ENCODE measurements at regions of chr10 and their contacts with region 1.

Region 1: DNA sequence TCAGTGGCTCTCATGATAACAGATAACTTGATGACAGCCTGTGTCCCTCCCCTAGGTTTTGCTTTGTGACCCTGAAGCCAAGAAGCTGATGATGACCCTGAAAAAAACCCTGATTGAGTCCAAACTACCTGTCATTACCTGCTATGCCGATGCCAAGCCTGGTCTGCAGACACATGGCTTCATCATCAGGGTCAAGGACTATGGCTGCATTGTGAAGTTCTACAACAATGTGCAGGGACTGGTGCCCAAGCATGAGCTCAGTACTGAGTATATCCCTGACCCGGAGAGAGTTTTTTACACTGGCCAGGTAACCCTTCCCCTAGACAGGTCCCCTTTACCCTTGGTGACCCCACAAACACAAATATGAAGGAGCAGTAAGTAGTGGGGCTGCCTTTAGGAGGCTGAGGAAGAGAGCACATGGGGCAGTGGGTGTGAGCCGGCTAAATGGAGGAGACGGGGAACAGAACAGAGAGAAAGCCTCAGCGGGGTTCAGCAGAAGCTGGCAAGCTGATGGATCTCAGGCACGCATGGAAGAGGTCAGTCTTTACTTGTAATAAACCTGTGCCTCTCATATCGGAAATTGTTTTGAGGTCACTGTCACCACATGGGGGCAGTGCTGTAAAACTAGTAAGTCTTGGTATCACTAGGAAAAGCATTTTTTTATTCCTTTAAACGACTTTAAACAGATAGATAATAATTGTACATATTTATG is 20.2 kb downstream of the PDCD11 start:
- DNase-seq: peak; percentile 81
- H3K4me3 Mint-ChIP-seq: no peak overlapping the region
- H3K27ac Mint-ChIP-seq: no peak overlapping the region
- H3K4me1 Mint-ChIP-seq: peaks cover 10% of the 10 kb centered on the region
- H3K27me3 Mint-ChIP-seq: no peaks in the 10 kb centered on the region

Region 2: DNA sequence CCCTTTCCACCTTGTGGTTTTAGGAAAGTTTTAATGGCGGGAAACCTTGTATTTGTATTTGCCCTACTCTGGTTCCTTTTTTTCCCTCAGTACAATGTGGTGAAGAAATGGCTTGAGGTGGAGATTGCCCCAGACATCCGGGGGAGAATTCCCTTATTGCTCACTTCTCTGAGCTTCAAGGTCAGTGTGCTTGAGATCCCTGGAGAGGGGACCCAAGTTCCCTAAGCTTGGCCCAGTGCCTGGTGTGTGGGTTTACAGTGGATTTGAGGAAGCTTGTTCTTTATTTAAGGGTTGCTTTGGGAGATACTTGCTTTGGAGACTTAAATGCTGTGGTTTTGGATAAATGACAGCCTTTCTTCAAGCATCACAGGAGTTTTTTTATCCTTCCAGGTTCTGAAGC is 17.3 kb after region 1 on chr10:
- CTCF ChIA-PET with region 1: interaction called, 14 read pairs
- DNase-seq: no peak
- H3K4me3 Mint-ChIP-seq: no peak overlapping the region
- H3K27ac Mint-ChIP-seq: peak overlapping the region; percentile 33
- H3K4me1 Mint-ChIP-seq: peaks cover 50% of the 10 kb centered on the region
- H3K27me3 Mint-ChIP-seq: no peaks in the 10 kb centered on the region

Region 3: DNA sequence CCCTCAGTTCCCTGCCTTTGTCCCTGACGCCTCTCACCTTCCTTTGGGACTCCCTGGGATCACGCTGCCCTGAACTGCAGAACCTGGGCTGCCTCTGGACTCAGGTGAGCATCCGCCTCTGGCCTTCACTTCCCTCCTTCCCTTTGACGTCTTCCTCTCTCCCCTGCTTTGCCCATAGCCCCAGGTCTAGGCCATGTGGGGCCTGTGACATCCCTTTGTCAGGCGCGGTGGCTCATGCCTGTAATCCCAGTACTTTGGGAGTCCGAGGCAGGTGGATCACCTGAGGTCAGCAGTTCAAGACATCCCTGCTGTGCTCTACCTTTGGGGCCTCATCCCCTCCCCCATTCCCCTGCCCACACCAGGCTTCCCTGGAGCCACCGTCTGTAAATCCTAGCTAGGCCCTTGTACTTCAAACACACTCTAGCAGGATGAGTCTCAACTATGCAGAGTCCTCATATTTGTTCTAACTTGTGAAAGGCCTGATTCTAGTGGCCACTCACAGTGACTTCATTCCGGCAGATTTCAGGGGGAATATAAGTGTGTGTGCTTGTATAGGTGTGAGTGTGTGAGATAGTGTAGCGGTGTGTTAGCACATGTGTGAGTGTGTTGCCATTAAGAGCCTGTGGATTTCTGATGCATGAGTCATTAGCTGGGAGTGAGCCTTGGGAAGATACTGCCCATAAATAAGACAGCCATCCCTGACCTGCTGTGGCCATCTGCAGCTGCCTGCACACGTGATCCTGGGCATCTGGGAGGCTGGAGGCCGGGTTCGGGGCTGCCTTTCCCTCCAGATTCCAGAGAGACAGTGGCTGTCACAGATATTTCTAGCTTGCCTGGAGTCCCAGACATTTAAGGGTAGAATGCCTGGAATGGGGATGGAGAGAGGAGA is 75.1 kb after region 1 on chr10:
- CTCF ChIA-PET with region 1: interaction called, 176 read pairs
- DNase-seq: no peak
- H3K4me3 Mint-ChIP-seq: no peak overlapping the region
- H3K27ac Mint-ChIP-seq: no peak overlapping the region
- H3K4me1 Mint-ChIP-seq: peaks cover 19% of the 10 kb centered on the region
- H3K27me3 Mint-ChIP-seq: peaks cover 67% of the 10 kb centered on the region